ENCODE measurements at regions of chr7 and their contacts with region 1.

Region 1: GRCh38 chr7:32479574-32480200 is 10.5 kb downstream of the LSM5 start:
- DNase-seq: peak; percentile 75
- H3K4me3 ChIP-seq: no peak overlapping the region
- H3K27ac ChIP-seq: no peak overlapping the region
- H3K4me1 ChIP-seq: no peaks in the 10 kb centered on the region
- H3K27me3 ChIP-seq: peaks cover 9% of the 10 kb centered on the region
- CTCF ChIP-seq: peak; percentile 86

Region 2: GRCh38 chr7:31744294-31744874 is 735.3 kb before region 1 on chr7:
- CTCF ChIA-PET with region 1: interaction called, 3 read pairs
- POLR2A ChIA-PET with region 1: no interaction called
- intact Hi-C with region 1: loop called (anchors 1 kb)
- DNase-seq: peak; percentile 75
- H3K4me3 ChIP-seq: no peak overlapping the region
- H3K27ac ChIP-seq: no peak overlapping the region
- H3K4me1 ChIP-seq: no peaks in the 10 kb centered on the region
- H3K27me3 ChIP-seq: peaks cover 13% of the 10 kb centered on the region
- CTCF ChIP-seq: peak; percentile 88

Region 3: DNA sequence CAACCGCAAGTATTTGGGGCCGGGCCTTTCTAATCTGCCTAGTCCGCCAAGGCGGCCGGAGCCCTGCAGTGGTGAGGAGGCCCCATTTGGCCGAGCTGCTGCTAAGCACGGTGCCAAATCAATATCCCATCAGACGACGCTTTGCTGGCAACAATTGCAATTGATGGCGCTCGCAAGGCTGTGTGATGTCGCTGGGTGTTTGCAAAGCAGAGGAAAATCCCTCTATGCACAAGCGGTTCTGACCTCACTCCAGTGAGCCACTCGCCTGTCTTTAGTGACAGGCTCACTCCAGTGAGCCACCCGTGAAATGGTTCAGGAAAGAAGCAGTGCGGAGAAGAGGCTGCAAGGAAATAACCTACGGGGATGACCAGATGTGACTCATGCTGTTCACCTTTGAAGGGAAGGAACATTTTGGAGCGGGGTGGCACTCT is 391.2 kb before region 1 on chr7:
- CTCF ChIA-PET with region 1: no interaction called
- POLR2A ChIA-PET with region 1: no interaction called
- intact Hi-C with region 1: no loop called
- DNase-seq: no peak
- H3K4me3 ChIP-seq: no peak overlapping the region
- H3K27ac ChIP-seq: no peak overlapping the region
- H3K4me1 ChIP-seq: no peaks in the 10 kb centered on the region
- H3K27me3 ChIP-seq: peaks cover 33% of the 10 kb centered on the region
- CTCF ChIP-seq: no peak

Region 4: DNA sequence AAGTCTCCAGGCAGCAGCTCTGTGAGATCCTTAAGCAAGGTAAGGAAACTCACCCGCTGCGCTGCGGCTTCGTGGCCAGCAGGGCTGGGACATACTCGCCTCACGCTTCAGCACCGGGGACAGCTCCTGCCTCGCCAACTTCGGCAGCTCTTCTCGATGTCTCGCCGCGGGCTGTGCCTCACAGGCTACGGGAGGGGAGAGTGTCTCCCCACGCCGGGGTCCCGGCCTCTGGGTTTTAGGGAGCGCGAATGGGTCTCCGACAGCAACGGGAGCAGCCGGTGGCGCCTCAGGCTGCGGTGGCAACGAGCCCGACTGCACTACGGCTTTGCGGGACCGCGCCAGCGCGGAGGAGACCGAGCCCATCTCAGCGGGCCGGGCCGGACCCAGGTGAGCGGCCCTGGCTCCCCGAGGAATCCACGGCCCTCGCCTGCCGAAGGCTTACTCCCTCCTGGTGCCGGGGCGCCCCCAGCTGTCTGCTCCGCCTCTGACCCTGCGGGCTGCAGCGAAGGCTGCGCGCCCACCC is 51.9 kb before region 1 on chr7:
- CTCF ChIA-PET with region 1: no interaction called
- POLR2A ChIA-PET with region 1: no interaction called
- intact Hi-C with region 1: loop called (anchors 2 kb)
- DNase-seq: peak; percentile 89
- H3K4me3 ChIP-seq: no peak overlapping the region
- H3K27ac ChIP-seq: no peak overlapping the region
- H3K4me1 ChIP-seq: no peaks in the 10 kb centered on the region
- H3K27me3 ChIP-seq: peaks cover 50% of the 10 kb centered on the region
- CTCF ChIP-seq: peak; percentile 35; the same call in 1 of the 2 replicates

Region 5: GRCh38 chr7:32453341-32454011 is 26.2 kb before region 1 on chr7:
- CTCF ChIA-PET with region 1: no interaction called
- POLR2A ChIA-PET with region 1: no interaction called
- intact Hi-C with region 1: loop called (anchors 2 kb)
- DNase-seq: no peak
- H3K4me3 ChIP-seq: no peak overlapping the region
- H3K27ac ChIP-seq: no peak overlapping the region
- H3K4me1 ChIP-seq: no peaks in the 10 kb centered on the region
- H3K27me3 ChIP-seq: peaks cover 46% of the 10 kb centered on the region
- CTCF ChIP-seq: no peak

Region 6: GRCh38 chr7:32942786-32943653 is 463.3 kb after region 1 on chr7:
- CTCF ChIA-PET with region 1: no interaction called
- POLR2A ChIA-PET with region 1: interaction called, 10 read pairs
- intact Hi-C with region 1: no loop called
- DNase-seq: peak; percentile 92
- H3K4me3 ChIP-seq: peak overlapping the region; percentile 86
- H3K27ac ChIP-seq: peak overlapping the region; percentile 91
- H3K4me1 ChIP-seq: peaks cover 7% of the 10 kb centered on the region
- H3K27me3 ChIP-seq: no peaks in the 10 kb centered on the region
- CTCF ChIP-seq: peak; percentile 60

Measured in A673 (cell line).